ENCODE measurements at regions of chr14 and their contacts with region 1.

Region 1: GRCh38 chr14:21557084-21557901 is 22.6 kb downstream of the OR10G3 start:
- DNase-seq: peak; percentile 84 to 97
- H3K4me3 ChIP-seq: peak overlapping the region in 2 of 4 experiments; percentile 21 to 32; a peak in 2 of 8 replicates
- H3K27ac ChIP-seq: peak overlapping the region; percentile 82
- H3K4me1 ChIP-seq: peaks cover 7 to 24% (median 18%) of the 10 kb centered on the region in 4 experiments
- H3K27me3 ChIP-seq: no peaks in the 10 kb centered on the region
- CTCF ChIP-seq: peak in 2 of 3 experiments; percentile 55 to 69; a peak in 3 of 4 replicates
- EP300 ChIP-seq: peak; percentile 69 to 95
- POLR2A ChIP-seq: peak in 1 of 2 experiments; percentile 70; a peak in 2 of 3 replicates
- RAD21 ChIP-seq: peak; percentile 82 to 84

Region 2: GRCh38 chr14:21476925-21477681 is 80.2 kb before region 1 on chr14 and contains the starts of genes RAB2B and TOX4:
- CTCF ChIA-PET with region 1: interaction called, 6 read pairs
- POLR2A ChIA-PET with region 1: interaction called, 13 read pairs
- DNase-seq: peak; percentile 95 to 96
- H3K4me3 ChIP-seq: peak within 1 kb of the TSS; percentile 88 to 100 (median 96)
- H3K27ac ChIP-seq: peak within 1 kb of the TSS; percentile 36
- H3K4me1 ChIP-seq: no peaks in the 10 kb centered on the region; a peak in 1 of 7 replicates
- H3K27me3 ChIP-seq: no peaks in the 10 kb centered on the region
- CTCF ChIP-seq: peak; percentile 83 to 99 (median 99)
- EP300 ChIP-seq: peak in 1 of 2 experiments; percentile 66; a peak in 2 of 3 replicates
- POLR2A ChIP-seq: peak in 1 of 2 experiments; percentile 71; a peak in 2 of 3 replicates
- RAD21 ChIP-seq: peak; percentile 41 to 53; a peak in 3 of 4 replicates
- total RNA-seq, gene RAB2B: 26.1 and 27.6 TPM in 2 replicates
- total RNA-seq, gene TOX4: 49.5 and 58.3 TPM in 2 replicates

Region 3: GRCh38 chr14:21510735-21511657 is 46.3 kb before region 1 on chr14 and contains the start of gene METTL3:
- CTCF ChIA-PET with region 1: interaction called, 5 read pairs
- POLR2A ChIA-PET with region 1: interaction called, 26 read pairs
- DNase-seq: peak; percentile 83 to 93
- H3K4me3 ChIP-seq: peak within 1 kb of the TSS; percentile 58 to 98 (median 86)
- H3K27ac ChIP-seq: peak within 1 kb of the TSS; percentile 88
- H3K4me1 ChIP-seq: peaks cover 0 to 5% (median 2%) of the 10 kb centered on the region in 4 experiments; a peak in 4 of 7 replicates
- H3K27me3 ChIP-seq: no peaks in the 10 kb centered on the region
- CTCF ChIP-seq: no peak
- EP300 ChIP-seq: no peak
- POLR2A ChIP-seq: peak; percentile 74 to 93
- RAD21 ChIP-seq: 0 out of 4 replicates have a peak, but pooled peaks of 1 of the 2 experiments have one; percentile 4
- total RNA-seq, gene METTL3: 98.6 and 103 TPM in 2 replicates

Region 4: GRCh38 chr14:21525962-21526671 is 31.2 kb before region 1 on chr14 and contains the start of gene SALL2:
- CTCF ChIA-PET with region 1: interaction called, 11 read pairs
- POLR2A ChIA-PET with region 1: interaction called, 61 read pairs
- DNase-seq: peak; percentile 93 to 97
- H3K4me3 ChIP-seq: peak within 1 kb of the TSS; percentile 50 to 82 (median 71)
- H3K27ac ChIP-seq: peak within 1 kb of the TSS; percentile 90
- H3K4me1 ChIP-seq: peaks cover 14 to 69% (median 42%) of the 10 kb centered on the region in 4 experiments
- H3K27me3 ChIP-seq: no peaks in the 10 kb centered on the region
- CTCF ChIP-seq: no peak
- EP300 ChIP-seq: peak in 1 of 2 experiments; percentile 87; a peak in 1 of 3 replicates
- POLR2A ChIP-seq: peak; percentile 36 to 85
- RAD21 ChIP-seq: peak in 1 of 2 experiments; percentile 16; a peak in 1 of 4 replicates
- total RNA-seq, gene SALL2: 346 and 360 TPM in 2 replicates

Region 5: DNA sequence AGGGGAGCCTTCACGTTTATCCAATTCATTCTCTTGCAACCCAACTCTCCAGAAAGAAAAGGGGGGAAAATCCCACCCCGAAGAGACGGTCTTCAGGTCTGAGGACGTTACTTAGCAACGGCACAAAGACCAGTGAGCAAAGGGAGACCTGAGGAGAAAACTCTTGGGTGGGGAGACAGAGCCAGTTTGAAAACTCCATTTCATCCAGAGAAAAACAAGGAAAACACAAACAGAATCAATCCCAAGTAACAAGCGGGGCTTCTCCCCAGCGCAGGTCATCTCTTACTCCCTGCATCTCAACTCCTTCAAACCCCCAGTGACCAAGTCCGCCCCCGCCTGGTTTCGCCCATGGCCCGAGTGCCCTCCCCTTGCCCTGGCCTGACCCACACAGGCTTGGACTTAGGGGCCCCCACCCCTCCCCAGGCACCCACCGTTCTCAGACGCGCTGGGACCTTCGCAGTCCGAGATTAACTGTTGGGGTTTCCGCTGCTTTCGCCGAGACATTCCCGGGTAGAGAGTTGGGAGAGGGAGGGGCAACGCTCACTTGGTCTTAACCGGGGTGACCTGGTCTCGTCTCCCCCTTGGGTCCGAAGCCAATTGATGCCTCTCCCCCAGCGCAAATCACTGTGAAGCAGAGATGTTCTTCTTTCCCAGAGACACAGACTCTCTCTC is 20.7 kb before region 1 on chr14:
- CTCF ChIA-PET with region 1: interaction called, 5 read pairs
- POLR2A ChIA-PET with region 1: interaction called, 40 read pairs
- DNase-seq: peak in 1 of 2 experiments; percentile 76
- H3K4me3 ChIP-seq: peak overlapping the region; percentile 87 to 96 (median 92)
- H3K27ac ChIP-seq: peak overlapping the region; percentile 91
- H3K4me1 ChIP-seq: peaks cover 0 to 20% (median 15%) of the 10 kb centered on the region in 4 experiments
- H3K27me3 ChIP-seq: no peaks in the 10 kb centered on the region
- CTCF ChIP-seq: no peak
- EP300 ChIP-seq: peak in 1 of 2 experiments; percentile 40; a peak in 1 of 3 replicates
- POLR2A ChIP-seq: peak; percentile 63 to 84
- RAD21 ChIP-seq: no peak

Region 6: GRCh38 chr14:21589317-21589716 is 32.0 kb after region 1 on chr14:
- CTCF ChIA-PET with region 1: no interaction called
- POLR2A ChIA-PET with region 1: no interaction called
- DNase-seq: no peak
- H3K4me3 ChIP-seq: no peak overlapping the region
- H3K27ac ChIP-seq: no peak overlapping the region
- H3K4me1 ChIP-seq: no peaks in the 10 kb centered on the region
- H3K27me3 ChIP-seq: no peaks in the 10 kb centered on the region
- CTCF ChIP-seq: no peak
- EP300 ChIP-seq: no peak
- POLR2A ChIP-seq: no peak
- RAD21 ChIP-seq: no peak